ENCODE measurements at regions of chr13 and their contacts with region 1.

Region 1: GRCh38 chr13:41222259-41222852 is 28.0 kb upstream of the KBTBD7 start:
- DNase-seq: peak; percentile 14 to 37
- H3K4me3 ChIP-seq: no peak overlapping the region
- H3K27ac ChIP-seq: no peak overlapping the region
- H3K4me1 ChIP-seq: no peaks in the 10 kb centered on the region
- H3K27me3 ChIP-seq: no peaks in the 10 kb centered on the region
- CTCF ChIP-seq: peak; percentile 77

Region 2: GRCh38 chr13:41075034-41075433 is 147.3 kb before region 1 on chr13:
- CTCF ChIA-PET with region 1: no interaction called
- POLR2A ChIA-PET with region 1: no interaction called
- intact Hi-C with region 1: loop called (anchors 2 kb)
- DNase-seq: peak in 1 of 2 experiments; percentile 6
- H3K4me3 ChIP-seq: no peak overlapping the region
- H3K27ac ChIP-seq: no peak overlapping the region
- H3K4me1 ChIP-seq: no peaks in the 10 kb centered on the region
- H3K27me3 ChIP-seq: no peaks in the 10 kb centered on the region
- CTCF ChIP-seq: peak; percentile 70